ENCODE measurements at regions of chr5 and their contacts with region 1.

Region 1: DNA sequence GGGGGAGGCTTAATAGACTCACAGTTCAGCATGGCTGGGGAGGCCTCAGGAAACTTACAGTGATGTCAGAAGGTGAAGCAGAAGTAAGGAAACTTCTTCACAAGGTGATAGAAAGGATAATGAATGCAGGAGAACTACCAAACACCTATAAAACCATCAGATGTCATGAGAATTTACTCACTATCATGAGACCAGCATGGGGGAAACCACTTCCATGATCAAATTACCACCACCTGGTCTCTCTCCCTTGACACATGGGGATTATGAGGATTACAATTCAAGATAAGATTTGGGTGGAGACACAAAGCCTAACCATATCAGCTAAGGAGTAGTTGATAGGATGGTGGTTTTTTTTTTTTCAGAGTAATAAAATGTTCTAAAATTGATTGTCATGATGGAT is 201.8 kb downstream of the CDH12 start:
- DNase-seq: no peak
- H3K4me3 Mint-ChIP-seq: no peak overlapping the region
- H3K27ac Mint-ChIP-seq: no peak overlapping the region
- H3K4me1 Mint-ChIP-seq: peaks cover 9% of the 10 kb centered on the region
- H3K27me3 Mint-ChIP-seq: no peaks in the 10 kb centered on the region
- CTCF ChIP-seq: no peak

Region 2: DNA sequence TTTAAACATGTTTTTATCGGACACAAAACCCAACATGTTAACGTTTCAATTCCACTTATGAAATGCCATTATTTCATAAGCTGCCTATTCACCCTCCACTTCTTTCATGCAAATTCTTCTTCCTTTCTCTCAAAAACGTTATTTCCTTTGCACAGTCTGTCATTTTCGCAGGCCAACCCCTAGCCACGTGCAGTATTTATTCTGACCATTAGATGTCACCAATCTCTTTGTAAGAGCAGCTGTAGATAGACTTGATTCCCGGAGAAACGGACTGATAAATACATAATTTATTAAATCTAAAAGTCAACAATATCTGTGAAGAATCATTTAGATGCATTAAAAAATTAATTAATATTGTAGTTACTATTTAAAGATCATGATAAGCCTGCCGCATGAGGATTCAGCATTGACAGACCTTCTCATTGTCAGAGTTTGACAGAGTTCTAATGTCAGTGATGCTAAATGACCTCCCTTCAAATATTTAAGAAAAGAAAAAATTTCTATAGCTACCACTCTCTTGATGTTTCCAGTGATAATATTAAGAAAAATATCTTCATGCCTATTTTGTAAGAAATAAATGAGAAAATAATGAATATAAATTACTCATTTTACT is 731.8 kb before region 1 on chr5:
- CTCF ChIA-PET with region 1: no interaction called
- intact Hi-C with region 1: loop called (anchors 2 kb)
- DNase-seq: peak; percentile 34
- H3K4me3 Mint-ChIP-seq: no peak overlapping the region
- H3K27ac Mint-ChIP-seq: no peak overlapping the region
- H3K4me1 Mint-ChIP-seq: no peaks in the 10 kb centered on the region
- H3K27me3 Mint-ChIP-seq: no peaks in the 10 kb centered on the region
- CTCF ChIP-seq: no peak

Region 3: DNA sequence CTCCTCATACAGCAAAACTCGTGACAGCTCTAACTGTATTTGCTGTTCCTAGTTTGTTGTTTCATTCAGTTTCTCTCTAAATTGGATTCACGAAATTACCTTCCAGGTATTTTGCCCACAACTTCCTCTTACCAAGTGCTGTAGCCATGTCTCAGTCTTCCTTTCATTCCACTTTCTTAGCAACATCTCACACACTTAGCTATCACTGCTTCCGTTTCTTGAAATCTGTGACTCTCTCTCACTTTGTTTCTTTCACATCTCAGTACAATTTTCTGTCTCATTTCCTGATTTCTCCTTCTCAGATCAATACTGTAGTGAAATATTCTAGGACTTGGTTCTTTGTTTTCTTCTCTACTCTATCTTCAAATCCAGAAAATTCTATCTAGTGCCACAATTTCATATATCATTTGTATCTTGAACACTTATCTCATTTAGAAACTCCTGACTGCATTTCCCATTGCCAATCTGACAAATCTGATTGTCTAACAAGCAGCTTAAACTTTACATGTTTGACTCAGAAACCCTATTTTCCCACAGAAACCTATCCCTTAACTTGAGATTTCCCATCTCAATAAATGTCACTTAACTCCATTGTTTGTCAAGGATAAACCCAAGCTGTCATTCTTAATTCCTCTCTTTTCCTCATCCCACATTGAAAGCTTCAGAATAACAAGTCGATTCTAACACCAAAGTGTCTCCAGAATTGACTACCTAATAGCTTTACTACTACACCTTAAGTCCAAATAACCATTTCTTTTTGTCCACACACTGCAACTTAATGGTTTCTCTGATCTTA is 101.3 kb before region 1 on chr5:
- CTCF ChIA-PET with region 1: no interaction called
- intact Hi-C with region 1: no loop called
- DNase-seq: no peak
- H3K4me3 Mint-ChIP-seq: no peak overlapping the region
- H3K27ac Mint-ChIP-seq: no peak overlapping the region
- H3K4me1 Mint-ChIP-seq: peaks cover 7% of the 10 kb centered on the region
- H3K27me3 Mint-ChIP-seq: no peaks in the 10 kb centered on the region
- CTCF ChIP-seq: no peak

Region 4: GRCh38 chr5:22793463-22793862 is 142.1 kb after region 1 on chr5:
- CTCF ChIA-PET with region 1: no interaction called
- intact Hi-C with region 1: no loop called
- DNase-seq: no peak
- H3K4me3 Mint-ChIP-seq: no peak overlapping the region
- H3K27ac Mint-ChIP-seq: no peak overlapping the region
- H3K4me1 Mint-ChIP-seq: no peaks in the 10 kb centered on the region
- H3K27me3 Mint-ChIP-seq: no peaks in the 10 kb centered on the region
- CTCF ChIP-seq: no peak